ENCODE measurements at regions of chr17 and their contacts with region 1.

Region 1: DNA sequence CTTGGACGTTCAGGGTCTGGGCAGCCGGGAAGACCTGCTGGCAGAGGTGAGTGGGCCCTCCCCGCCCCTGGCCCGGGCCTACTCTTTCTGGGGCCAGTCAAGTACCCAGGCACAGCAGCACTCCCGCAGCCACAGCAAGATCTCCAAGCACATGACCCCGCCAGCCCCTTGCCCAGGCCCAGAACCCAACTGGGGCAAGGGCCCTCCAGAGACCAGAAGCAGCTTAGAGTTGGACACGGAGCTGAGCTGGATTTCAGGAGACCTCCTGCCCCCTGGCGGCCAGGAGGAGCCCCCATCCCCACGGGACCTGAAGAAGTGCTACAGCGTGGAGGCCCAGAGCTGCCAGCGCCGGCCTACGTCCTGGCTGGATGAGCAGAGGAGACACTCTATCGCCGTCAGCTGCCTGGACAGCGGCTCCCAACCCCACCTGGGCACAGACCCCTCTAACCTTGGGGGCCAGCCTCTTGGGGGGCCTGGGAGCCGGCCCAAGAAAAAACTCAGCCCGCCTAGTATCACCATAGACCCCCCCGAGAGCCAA is 8.6 kb upstream of the ABCC3 start:
- DNase-seq: peak; percentile 73 to 87
- H3K4me3 ChIP-seq: no peak overlapping the region
- H3K27ac ChIP-seq: no peak overlapping the region
- H3K4me1 ChIP-seq: peaks cover 0 to 39% (median 18%) of the 10 kb centered on the region in 4 experiments; a peak in 6 of 7 replicates
- H3K27me3 ChIP-seq: peaks cover 0 to 2% (median 0%) of the 10 kb centered on the region in 4 experiments; a peak in 3 of 7 replicates
- CTCF ChIP-seq: peak; percentile 92 to 97 (median 92)
- EP300 ChIP-seq: no peak
- POLR2A ChIP-seq: no peak
- RAD21 ChIP-seq: peak; percentile 86 to 92

Region 2: GRCh38 chr17:50547035-50547735 is 78.9 kb before region 1 on chr17 and contains the start of gene SPATA20:
- CTCF ChIA-PET with region 1: interaction called, 404 read pairs
- POLR2A ChIA-PET with region 1: interaction called, 10 read pairs
- DNase-seq: peak; percentile 78 to 92
- H3K4me3 ChIP-seq: peak within 1 kb of the TSS; percentile 32 to 67 (median 57)
- H3K27ac ChIP-seq: no peak within 1 kb of the TSS; the same call in 1 of the 2 replicates
- H3K4me1 ChIP-seq: peaks cover 6 to 20% (median 13%) of the 10 kb centered on the region in 4 experiments
- H3K27me3 ChIP-seq: no peaks in the 10 kb centered on the region
- CTCF ChIP-seq: peak; percentile 94 to 97 (median 96)
- EP300 ChIP-seq: no peak
- POLR2A ChIP-seq: peak in 1 of 2 experiments; percentile 83; a peak in 2 of 3 replicates
- RAD21 ChIP-seq: peak; percentile 99
- total RNA-seq, gene SPATA20: 16.2 and 16.7 TPM in 2 replicates

Region 3: GRCh38 chr17:50583641-50584040 is 42.5 kb before region 1 on chr17:
- CTCF ChIA-PET with region 1: interaction called, 95 read pairs
- POLR2A ChIA-PET with region 1: no interaction called
- DNase-seq: no peak
- H3K4me3 ChIP-seq: no peak overlapping the region
- H3K27ac ChIP-seq: no peak overlapping the region
- H3K4me1 ChIP-seq: peaks cover 0 to 22% (median 9%) of the 10 kb centered on the region in 4 experiments; a peak in 6 of 7 replicates
- H3K27me3 ChIP-seq: no peaks in the 10 kb centered on the region; a peak in 1 of 7 replicates
- CTCF ChIP-seq: no peak
- EP300 ChIP-seq: no peak
- POLR2A ChIP-seq: no peak
- RAD21 ChIP-seq: no peak

Region 4: GRCh38 chr17:50604513-50604912 is 21.6 kb before region 1 on chr17:
- CTCF ChIA-PET with region 1: interaction called, 300 read pairs
- POLR2A ChIA-PET with region 1: interaction called, 3 read pairs
- DNase-seq: no peak
- H3K4me3 ChIP-seq: no peak overlapping the region
- H3K27ac ChIP-seq: no peak overlapping the region
- H3K4me1 ChIP-seq: peaks cover 0 to 15% (median 4%) of the 10 kb centered on the region in 4 experiments; a peak in 5 of 7 replicates
- H3K27me3 ChIP-seq: no peaks in the 10 kb centered on the region
- CTCF ChIP-seq: no peak
- EP300 ChIP-seq: no peak
- POLR2A ChIP-seq: no peak
- RAD21 ChIP-seq: no peak

Region 5: DNA sequence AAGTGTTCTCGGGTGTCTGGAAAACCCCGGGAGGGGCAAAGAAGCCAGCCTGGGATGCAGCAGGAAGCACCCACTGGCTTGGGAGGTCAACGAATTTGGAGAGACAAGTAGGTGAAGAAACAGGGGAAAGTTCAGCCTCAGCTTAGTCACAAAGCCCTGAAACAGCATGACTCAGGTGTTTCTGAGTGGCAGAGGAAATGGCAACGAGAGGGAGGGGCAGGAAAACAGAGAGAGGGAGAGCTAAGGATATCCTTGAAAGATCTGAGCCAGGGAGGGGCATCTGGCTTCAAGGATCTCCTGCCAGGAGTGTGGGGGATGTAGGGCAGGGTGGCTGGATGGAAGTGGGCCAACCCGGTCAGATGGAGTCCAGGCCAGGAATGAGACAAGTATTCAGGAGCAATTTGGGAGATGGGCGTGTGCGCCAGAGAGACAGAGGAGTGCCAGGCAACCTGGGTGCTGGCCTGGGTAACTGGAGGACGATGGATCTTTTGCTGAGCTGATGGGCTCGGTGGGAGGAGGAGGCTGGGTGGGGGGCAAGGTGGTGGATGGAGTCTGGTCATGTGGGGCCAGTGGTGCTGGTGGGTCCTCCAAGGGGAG is 35.8 kb after region 1 on chr17:
- CTCF ChIA-PET with region 1: interaction called, 41 read pairs
- POLR2A ChIA-PET with region 1: no interaction called
- DNase-seq: no peak
- H3K4me3 ChIP-seq: no peak overlapping the region
- H3K27ac ChIP-seq: no peak overlapping the region
- H3K4me1 ChIP-seq: peaks cover 3 to 8% (median 5%) of the 10 kb centered on the region in 4 experiments; a peak in 6 of 7 replicates
- H3K27me3 ChIP-seq: no peaks in the 10 kb centered on the region
- CTCF ChIP-seq: no peak
- EP300 ChIP-seq: no peak
- POLR2A ChIP-seq: no peak
- RAD21 ChIP-seq: no peak

Region 6: GRCh38 chr17:50697663-50698274 is 71.7 kb after region 1 on chr17:
- CTCF ChIA-PET with region 1: interaction called, 391 read pairs
- POLR2A ChIA-PET with region 1: interaction called, 3 read pairs
- DNase-seq: no peak
- H3K4me3 ChIP-seq: no peak overlapping the region
- H3K27ac ChIP-seq: no peak overlapping the region
- H3K4me1 ChIP-seq: no peaks in the 10 kb centered on the region
- H3K27me3 ChIP-seq: no peaks in the 10 kb centered on the region
- CTCF ChIP-seq: peak in 2 of 3 experiments; percentile 11 to 12; a peak in 1 of 4 replicates
- EP300 ChIP-seq: no peak
- POLR2A ChIP-seq: no peak
- RAD21 ChIP-seq: peak; percentile 25 to 37; a peak in 3 of 4 replicates

Region 7: DNA sequence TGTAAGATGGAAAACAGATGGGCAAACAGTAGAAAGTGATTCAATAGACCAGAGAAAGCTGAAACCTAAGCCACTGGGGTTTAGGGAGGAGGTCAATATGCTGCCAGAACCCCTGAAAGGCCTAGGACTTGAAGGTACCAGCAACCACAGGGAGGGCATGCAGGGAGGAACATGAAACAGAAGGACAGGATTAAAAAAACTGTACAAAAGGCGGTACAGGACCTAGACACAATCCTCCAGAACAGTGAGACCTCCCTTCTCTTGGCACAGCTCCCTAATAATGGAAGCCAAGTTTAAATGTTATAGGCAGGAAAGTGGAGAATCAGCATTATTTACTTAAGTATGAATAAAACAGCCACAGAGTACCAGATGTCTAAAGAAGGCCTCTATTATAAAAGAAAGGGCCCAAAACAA is 389.0 kb after region 1 on chr17:
- CTCF ChIA-PET with region 1: no interaction called
- POLR2A ChIA-PET with region 1: no interaction called
- DNase-seq: no peak
- H3K4me3 ChIP-seq: no peak overlapping the region
- H3K27ac ChIP-seq: no peak overlapping the region
- H3K4me1 ChIP-seq: no peaks in the 10 kb centered on the region
- H3K27me3 ChIP-seq: no peaks in the 10 kb centered on the region
- CTCF ChIP-seq: no peak
- EP300 ChIP-seq: no peak
- POLR2A ChIP-seq: no peak
- RAD21 ChIP-seq: no peak

Measured in H1 (cell line).